PC-9 (cell line): ENCODE measurements at regions of chr2 and their contacts with region 1.

Region 1: DNA sequence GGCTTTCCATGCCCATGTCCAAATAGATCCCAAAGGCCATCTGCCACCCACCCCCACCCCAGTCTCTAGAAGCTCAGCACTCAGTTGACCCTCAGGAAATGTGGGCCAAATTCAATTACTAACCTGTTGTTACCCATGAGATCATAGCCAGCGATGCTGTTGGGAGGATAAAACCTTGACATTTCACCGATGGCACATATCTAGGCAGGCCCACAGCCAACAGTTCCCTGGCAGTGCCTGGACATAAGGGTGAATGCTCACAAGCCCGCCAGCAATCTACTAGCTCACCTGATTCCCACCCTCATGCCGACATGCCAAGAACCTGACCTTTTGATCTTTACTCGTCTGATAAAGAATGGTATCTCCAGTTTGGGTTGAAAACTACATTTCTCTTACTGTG is 11.8 kb upstream of the ACOXL start:
- DNase-seq: no peak
- H3K4me3 ChIP-seq: no peak overlapping the region
- H3K27ac ChIP-seq: no peak overlapping the region
- H3K4me1 ChIP-seq: 0 out of 2 replicates have a peak, but pooled peaks cover 10% of the 10 kb centered on the region
- H3K27me3 ChIP-seq: no peaks in the 10 kb centered on the region
- CTCF ChIP-seq: no peak

Region 2: GRCh38 chr2:110662560-110662959 is 58.0 kb before region 1 on chr2:
- CTCF ChIA-PET with region 1: interaction called, 17 read pairs
- POLR2A ChIA-PET with region 1: no interaction called
- intact Hi-C with region 1: no loop called
- DNase-seq: no peak
- H3K4me3 ChIP-seq: no peak overlapping the region
- H3K27ac ChIP-seq: no peak overlapping the region
- H3K4me1 ChIP-seq: no peaks in the 10 kb centered on the region
- H3K27me3 ChIP-seq: no peaks in the 10 kb centered on the region
- CTCF ChIP-seq: no peak